ENCODE measurements at regions of chr17 and their contacts with region 1.

Region 1: GRCh38 chr17:51166197-51166986 is at the start of gene NME2:
- DNase-seq: peak; percentile 47
- ATAC-seq: peak; percentile 94
- H3K4me3 ChIP-seq: peak within 1 kb of the TSS; percentile 71 to 93
- H3K27ac ChIP-seq: peak within 1 kb of the TSS; percentile 89
- H3K4me1 ChIP-seq: peaks cover 11% of the 10 kb centered on the region
- H3K27me3 ChIP-seq: no peaks in the 10 kb centered on the region
- CTCF ChIP-seq: no peak
- total RNA-seq, gene NME2: 1,280 TPM

Region 2: GRCh38 chr17:51029568-51030463 is 136.6 kb before region 1 on chr17:
- CTCF ChIA-PET with region 1: interaction called, 13 read pairs
- POLR2A ChIA-PET with region 1: interaction called, 4 read pairs
- in situ Hi-C with region 1: no loop called
- intact Hi-C with region 1: no loop called
- DNase-seq: no peak
- ATAC-seq: no peak
- H3K4me3 ChIP-seq: no peak overlapping the region
- H3K27ac ChIP-seq: no peak overlapping the region
- H3K4me1 ChIP-seq: no peaks in the 10 kb centered on the region
- H3K27me3 ChIP-seq: no peaks in the 10 kb centered on the region
- CTCF ChIP-seq: no peak